ENCODE measurements at regions of chr14 and their contacts with region 1.

Region 1: GRCh38 chr14:32076278-32077080 is 625 bp upstream of the ARHGAP5 start:
- DNase-seq: peak; percentile 90
- H3K4me3 Mint-ChIP-seq: peak overlapping the region; percentile 94
- H3K27ac Mint-ChIP-seq: peak overlapping the region; percentile 85
- H3K4me1 Mint-ChIP-seq: peaks cover 26% of the 10 kb centered on the region
- H3K27me3 Mint-ChIP-seq: peaks cover 2% of the 10 kb centered on the region

Region 2: GRCh38 chr14:30621940-30622830 is 1454.3 kb before region 1 on chr14 and contains the start of gene SCFD1:
- CTCF ChIA-PET with region 1: no interaction called
- POLR2A ChIA-PET with region 1: no interaction called
- intact Hi-C with region 1: loop called (anchors 10 kb)
- DNase-seq: peak; percentile 96
- H3K4me3 Mint-ChIP-seq: peak within 1 kb of the TSS; percentile 83
- H3K27ac Mint-ChIP-seq: peak within 1 kb of the TSS; percentile 85
- H3K4me1 Mint-ChIP-seq: peaks cover 36% of the 10 kb centered on the region
- H3K27me3 Mint-ChIP-seq: no peaks in the 10 kb centered on the region
- total RNA-seq, gene SCFD1: 52.6 to 56.5 TPM

Region 3: DNA sequence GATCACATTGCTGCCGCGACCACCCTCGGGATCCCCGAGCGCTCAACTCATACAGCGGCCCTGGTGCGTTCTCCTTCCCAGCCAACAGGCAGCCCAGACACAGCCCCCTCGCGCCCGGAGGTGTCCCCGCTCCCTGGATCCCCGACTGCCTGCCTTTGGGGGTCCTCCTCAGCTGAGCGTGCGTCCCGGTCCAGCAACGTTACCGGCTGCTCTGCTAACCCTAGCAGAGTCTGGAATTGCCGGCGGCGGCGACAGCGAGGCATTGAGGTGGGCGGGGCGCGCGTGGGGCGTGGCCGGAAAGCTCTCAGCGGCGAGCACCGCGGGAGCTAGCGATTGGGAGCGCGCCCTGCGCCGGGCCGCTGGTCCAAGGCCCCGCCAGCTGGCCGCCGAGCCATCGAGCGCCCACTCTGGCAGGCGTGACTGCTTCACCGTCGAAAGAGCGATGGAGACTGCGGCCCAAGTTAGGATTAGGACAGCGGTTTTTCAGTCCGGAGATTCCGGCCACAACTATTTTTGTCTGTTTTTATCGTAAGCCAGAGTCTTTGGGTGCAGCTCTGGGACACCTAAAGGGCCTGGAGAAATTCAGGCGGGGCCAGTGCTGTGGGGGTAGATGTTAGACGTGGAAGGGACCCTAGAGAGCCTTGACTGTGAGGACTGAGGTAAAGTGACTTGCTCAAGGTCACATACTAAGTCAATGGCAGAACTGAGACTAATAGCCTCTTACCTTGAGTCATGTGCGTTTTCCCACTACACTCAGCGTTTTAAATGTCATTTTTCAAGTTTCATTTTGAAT is 656.0 kb before region 1 on chr14 and contains the start of gene HEATR5A:
- CTCF ChIA-PET with region 1: interaction called, 4 read pairs
- POLR2A ChIA-PET with region 1: no interaction called
- intact Hi-C with region 1: loop called (anchors 1 kb)
- DNase-seq: peak; percentile 94
- H3K4me3 Mint-ChIP-seq: peak within 1 kb of the TSS; percentile 84
- H3K27ac Mint-ChIP-seq: peak within 1 kb of the TSS; percentile 95
- H3K4me1 Mint-ChIP-seq: peaks cover 23% of the 10 kb centered on the region
- H3K27me3 Mint-ChIP-seq: no peaks in the 10 kb centered on the region
- total RNA-seq, gene HEATR5A: 12.8 to 13.0 TPM

Region 4: DNA sequence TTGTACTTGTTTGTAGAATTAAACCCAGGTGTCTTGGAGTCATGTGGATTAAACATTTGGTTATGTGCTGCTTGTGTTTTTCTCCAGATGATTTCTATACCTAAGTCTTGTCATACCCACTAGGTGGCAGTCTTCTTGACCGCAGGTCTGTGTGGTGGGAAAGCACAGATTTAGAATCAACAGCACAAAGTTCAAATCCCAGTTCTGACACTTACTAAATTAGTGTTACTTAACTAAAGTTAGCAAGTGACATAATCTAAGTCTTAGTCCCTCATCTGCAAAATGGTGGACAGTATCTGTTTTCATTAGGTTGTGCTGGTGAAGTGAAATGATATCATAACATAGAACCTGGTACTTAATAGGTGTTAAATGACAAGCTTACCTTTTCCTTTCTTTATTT is 150.4 kb before region 1 on chr14:
- CTCF ChIA-PET with region 1: interaction called, 13 read pairs
- POLR2A ChIA-PET with region 1: interaction called, 3 read pairs
- intact Hi-C with region 1: loop called (anchors 2 kb)
- DNase-seq: peak; percentile 21
- H3K4me3 Mint-ChIP-seq: no peak overlapping the region
- H3K27ac Mint-ChIP-seq: no peak overlapping the region
- H3K4me1 Mint-ChIP-seq: peaks cover 17% of the 10 kb centered on the region
- H3K27me3 Mint-ChIP-seq: no peaks in the 10 kb centered on the region

Region 5: DNA sequence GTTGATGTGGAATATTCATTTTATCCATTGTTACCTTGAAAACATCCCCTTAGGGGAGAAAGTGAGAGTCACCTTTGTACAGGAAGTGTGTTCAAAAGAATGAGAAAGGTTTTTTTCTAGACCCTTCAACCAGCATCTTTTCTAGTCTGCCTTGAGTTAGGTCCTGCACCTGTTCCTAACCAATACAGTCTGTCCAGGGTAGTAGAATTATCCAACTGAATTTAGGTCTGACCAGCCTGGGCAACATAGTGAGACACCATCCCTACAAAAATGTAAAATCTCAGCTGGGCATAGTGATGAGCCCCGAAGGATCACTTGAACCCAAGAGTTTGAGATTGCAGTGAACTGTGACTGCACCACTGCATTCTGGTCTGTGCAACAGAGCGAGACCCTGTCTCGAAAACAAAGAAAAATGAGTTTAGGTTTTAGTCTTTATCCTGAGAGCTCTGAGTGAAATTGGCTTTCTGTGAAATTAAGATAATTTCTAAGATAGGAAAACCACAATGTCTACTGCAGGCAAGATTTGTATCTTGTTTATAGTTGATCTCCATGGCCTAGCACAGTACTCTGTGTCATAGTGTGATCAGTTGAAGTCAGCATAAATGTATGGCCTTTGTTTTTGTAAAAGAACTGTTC is 25.8 kb after region 1 on chr14:
- CTCF ChIA-PET with region 1: no interaction called
- POLR2A ChIA-PET with region 1: interaction called, 7 read pairs
- intact Hi-C with region 1: loop called (anchors 1 kb)
- DNase-seq: peak; percentile 27
- H3K4me3 Mint-ChIP-seq: no peak overlapping the region
- H3K27ac Mint-ChIP-seq: peak overlapping the region; percentile 75
- H3K4me1 Mint-ChIP-seq: peaks cover 54% of the 10 kb centered on the region
- H3K27me3 Mint-ChIP-seq: no peaks in the 10 kb centered on the region

Region 6: DNA sequence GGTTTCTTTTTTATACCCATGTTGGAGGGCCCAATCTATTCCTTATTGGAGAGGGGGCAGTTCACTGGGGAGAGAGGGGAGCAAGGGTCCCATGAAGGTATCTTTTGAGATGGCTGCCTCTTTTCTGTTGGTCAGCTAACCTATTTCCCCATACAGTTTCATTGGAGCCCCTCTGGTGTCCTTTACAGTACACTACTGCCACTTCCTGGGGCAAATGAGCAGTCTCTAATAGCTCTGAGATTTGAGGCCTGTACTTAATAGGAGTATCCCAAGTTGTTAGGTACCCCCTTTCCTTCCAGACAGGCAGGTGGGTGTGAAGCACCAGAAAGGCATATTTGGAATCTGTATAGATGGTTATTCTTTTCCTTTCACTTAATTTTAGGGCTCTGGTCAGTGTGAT is 167.9 kb after region 1 on chr14:
- CTCF ChIA-PET with region 1: interaction called, 299 read pairs
- POLR2A ChIA-PET with region 1: no interaction called
- intact Hi-C with region 1: no loop called
- DNase-seq: no peak
- H3K4me3 Mint-ChIP-seq: no peak overlapping the region
- H3K27ac Mint-ChIP-seq: no peak overlapping the region
- H3K4me1 Mint-ChIP-seq: no peaks in the 10 kb centered on the region
- H3K27me3 Mint-ChIP-seq: no peaks in the 10 kb centered on the region

Region 7: GRCh38 chr14:32560209-32560857 is 483.9 kb after region 1 on chr14:
- CTCF ChIA-PET with region 1: interaction called, 3 read pairs
- POLR2A ChIA-PET with region 1: no interaction called
- intact Hi-C with region 1: loop called (anchors 5 kb)
- DNase-seq: peak; percentile 40
- H3K4me3 Mint-ChIP-seq: no peak overlapping the region
- H3K27ac Mint-ChIP-seq: no peak overlapping the region
- H3K4me1 Mint-ChIP-seq: peaks cover 12% of the 10 kb centered on the region
- H3K27me3 Mint-ChIP-seq: no peaks in the 10 kb centered on the region